Naive thymus-derived CD4-positive, alpha-beta T cell (primary cell): ENCODE measurements at regions of chrX and their contacts with region 1.

Region 1: GRCh38 chrX:15471016-15471415 is 22.1 kb downstream of the PIR start:
- DNase-seq: peak in 8 of 9 donors; percentile 7 to 53 (median 38)
- ATAC-seq: peak; percentile 80
- H3K4me3 ChIP-seq: no peak overlapping the region
- H3K4me3 Mint-ChIP-seq: no peak overlapping the region
- H3K27ac ChIP-seq: no peak overlapping the region
- H3K27ac Mint-ChIP-seq: no peak overlapping the region
- H3K4me1 ChIP-seq: no peaks in the 10 kb centered on the region
- H3K4me1 Mint-ChIP-seq: peaks cover 0 to 4% (median 0%) of the 10 kb centered on the region in 7 donors
- H3K27me3 ChIP-seq: no peaks in the 10 kb centered on the region
- H3K27me3 Mint-ChIP-seq: no peaks in the 10 kb centered on the region

Region 2: DNA sequence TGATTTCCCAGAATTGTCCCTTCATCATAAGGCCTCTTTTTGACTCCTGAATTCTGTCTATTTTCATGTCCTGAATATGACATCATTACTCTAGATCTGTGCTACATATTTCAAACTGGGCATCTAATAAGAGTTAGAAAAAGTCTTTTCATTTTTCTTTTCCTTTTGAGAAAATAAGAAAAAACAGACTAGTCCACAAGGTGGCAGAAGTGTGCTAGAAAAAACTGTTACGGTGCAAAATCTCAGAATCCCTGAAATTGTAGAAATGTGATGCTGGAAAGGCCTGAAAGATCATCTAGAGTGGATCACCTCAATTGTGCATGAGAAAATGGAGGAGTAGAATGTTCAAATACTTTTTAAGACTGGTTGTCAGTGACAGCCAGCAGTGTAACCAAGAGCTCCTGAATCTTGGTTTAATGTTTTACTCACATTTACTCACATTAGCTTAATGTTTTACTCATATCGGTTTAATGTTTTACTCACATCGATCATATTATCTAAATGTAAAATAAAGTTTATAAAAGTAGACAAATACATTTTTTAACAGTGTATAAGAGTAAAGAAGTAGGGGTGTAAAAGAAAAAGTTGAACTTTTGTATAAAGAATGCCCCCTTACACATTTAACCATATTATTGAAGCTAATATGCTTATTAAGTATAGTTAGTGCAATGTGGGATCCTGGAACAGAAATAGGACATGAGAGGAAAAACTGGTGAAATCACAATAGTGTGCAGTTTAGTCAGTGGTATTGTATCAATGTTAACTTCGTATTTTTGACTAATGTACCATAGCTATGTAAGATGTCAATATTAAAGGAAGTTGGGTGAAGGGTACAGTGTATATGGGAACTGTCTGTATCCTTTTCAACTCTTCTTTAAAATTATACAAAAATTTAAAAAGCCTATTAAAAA is 170.8 kb before region 1 on chrX:
- CTCF ChIA-PET with region 1: no interaction called
- POLR2A ChIA-PET with region 1: no interaction called
- intact Hi-C with region 1: loop called (anchors 1 to 2 kb)
- DNase-seq: peak in 1 of 9 donors; percentile 12
- ATAC-seq: no peak
- H3K4me3 ChIP-seq: no peak overlapping the region
- H3K4me3 Mint-ChIP-seq: no peak overlapping the region
- H3K27ac ChIP-seq: no peak overlapping the region
- H3K27ac Mint-ChIP-seq: peak overlapping the region in 1 of 9 donors; percentile 7
- H3K4me1 ChIP-seq: no peaks in the 10 kb centered on the region
- H3K4me1 Mint-ChIP-seq: peaks cover 0 to 10% (median 2%) of the 10 kb centered on the region in 7 donors
- H3K27me3 ChIP-seq: no peaks in the 10 kb centered on the region
- H3K27me3 Mint-ChIP-seq: no peaks in the 10 kb centered on the region

Region 3: GRCh38 chrX:15564981-15565579 is 94.1 kb after region 1 on chrX:
- CTCF ChIA-PET with region 1: no interaction called
- POLR2A ChIA-PET with region 1: no interaction called
- intact Hi-C with region 1: loop called in 1 of 2 experiments (anchors 1 kb)
- DNase-seq: peak in 3 of 9 donors; percentile 3 to 7 (median 5)
- ATAC-seq: peak; percentile 50
- H3K4me3 ChIP-seq: no peak overlapping the region
- H3K4me3 Mint-ChIP-seq: no peak overlapping the region
- H3K27ac ChIP-seq: no peak overlapping the region
- H3K27ac Mint-ChIP-seq: no peak overlapping the region
- H3K4me1 ChIP-seq: no peaks in the 10 kb centered on the region
- H3K4me1 Mint-ChIP-seq: no peaks in the 10 kb centered on the region
- H3K27me3 ChIP-seq: no peaks in the 10 kb centered on the region
- H3K27me3 Mint-ChIP-seq: peaks cover 0 to 14% (median 5%) of the 10 kb centered on the region in 5 donors